A549 (cell line): ENCODE measurements at regions of chr20 and their contacts with region 1.

Region 1: GRCh38 chr20:2172305-2173175 is 70.9 kb downstream of the STK35 start:
- DNase-seq: peak; percentile 59 to 88
- ATAC-seq: peak; percentile 86 to 89
- H3K4me3 ChIP-seq: no peak overlapping the region; the same call in 2 of the 3 replicates
- H3K27ac ChIP-seq: no peak overlapping the region
- H3K4me1 ChIP-seq: no peaks in the 10 kb centered on the region
- CTCF ChIP-seq: peak; percentile 97
- EP300 ChIP-seq: no peak
- POLR2A ChIP-seq: no peak
- RAD21 ChIP-seq: peak; percentile 97

Region 2: GRCh38 chr20:1657556-1658334 is 514.8 kb before region 1 on chr20 and contains the start of gene SIRPG:
- CTCF ChIA-PET with region 1: no interaction called
- POLR2A ChIA-PET with region 1: no interaction called
- DNase-seq: no peak
- ATAC-seq: no peak
- H3K4me3 ChIP-seq: no peak within 1 kb of the TSS
- H3K27ac ChIP-seq: no peak within 1 kb of the TSS
- H3K4me1 ChIP-seq: no peaks in the 10 kb centered on the region
- CTCF ChIP-seq: no peak
- EP300 ChIP-seq: no peak
- POLR2A ChIP-seq: no peak
- RAD21 ChIP-seq: no peak
- polyA plus RNA-seq, gene SIRPG: not detected in 2 replicates

Region 3: DNA sequence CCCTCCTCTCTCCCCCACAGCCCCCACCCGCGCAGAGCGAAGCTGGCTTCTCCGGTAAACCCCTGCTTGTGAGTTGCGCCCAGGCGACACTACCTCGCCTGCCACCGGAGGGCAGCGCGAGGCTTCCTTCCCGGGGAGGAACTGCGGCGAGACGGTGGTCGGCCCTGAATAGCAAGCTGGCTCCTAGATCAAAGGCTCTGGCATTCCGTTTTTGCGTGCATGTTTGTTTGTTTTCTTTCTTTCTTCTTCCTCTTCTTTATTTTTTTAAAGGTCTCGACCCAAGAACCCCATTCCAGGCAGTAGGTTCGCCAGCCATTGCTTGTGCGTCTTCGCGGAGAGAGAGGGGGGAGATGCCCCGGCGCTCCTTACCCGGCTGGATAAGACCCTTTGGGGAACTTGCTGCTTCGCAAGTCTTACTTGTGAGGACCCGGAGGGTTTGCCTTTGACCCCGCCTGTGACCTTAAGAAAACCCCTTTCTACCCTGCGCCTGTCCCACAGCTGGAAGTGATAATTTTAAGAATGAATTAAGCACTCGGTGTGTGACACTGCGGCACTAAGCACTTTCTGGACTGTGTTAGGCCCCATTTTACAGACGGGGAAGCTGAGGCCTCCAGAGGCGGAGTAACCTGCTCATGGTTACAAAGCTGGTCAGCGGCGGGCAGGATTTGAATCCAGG is 370.0 kb before region 1 on chr20:
- CTCF ChIA-PET with region 1: interaction called, 28 read pairs
- POLR2A ChIA-PET with region 1: no interaction called
- DNase-seq: peak; percentile 70 to 78
- ATAC-seq: peak; percentile 84 to 87
- H3K4me3 ChIP-seq: peak overlapping the region; percentile 28
- H3K27ac ChIP-seq: peak overlapping the region; percentile 47 to 62; a peak in 5 of 6 replicates
- H3K4me1 ChIP-seq: peaks cover 11% of the 10 kb centered on the region
- CTCF ChIP-seq: peak; percentile 81
- EP300 ChIP-seq: no peak
- POLR2A ChIP-seq: no peak
- RAD21 ChIP-seq: peak; percentile 84 to 95

Region 4: DNA sequence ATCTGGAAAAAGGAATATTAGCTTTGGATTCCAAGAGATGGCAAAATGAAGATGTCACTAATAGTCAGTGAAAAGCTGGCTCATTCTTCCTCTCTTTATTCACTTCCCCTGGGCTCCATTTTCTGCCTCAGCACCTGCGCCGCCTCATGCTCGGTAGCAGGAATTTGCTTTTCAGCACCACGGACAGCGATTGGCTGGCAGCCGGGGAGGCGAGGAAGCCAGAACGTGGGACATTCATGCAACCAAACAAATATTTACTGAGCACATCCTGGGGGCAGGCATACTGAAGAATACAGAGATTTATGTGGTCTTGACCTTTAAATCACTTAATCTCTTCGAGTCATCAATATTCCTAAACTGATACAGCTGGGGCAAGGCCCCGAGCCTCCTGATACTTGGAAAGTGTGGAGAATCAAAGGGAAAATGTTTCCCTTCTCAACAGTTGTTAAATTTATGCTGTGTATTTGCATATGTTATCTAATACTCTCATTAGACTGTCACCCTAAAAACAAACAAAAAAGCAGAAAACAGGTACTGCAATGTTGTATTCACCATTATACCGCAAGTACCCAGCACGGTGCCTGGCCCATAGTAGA is 166.6 kb before region 1 on chr20:
- CTCF ChIA-PET with region 1: interaction called, 100 read pairs
- POLR2A ChIA-PET with region 1: no interaction called
- DNase-seq: peak in 1 of 2 experiments; percentile 55
- ATAC-seq: peak in 1 of 2 experiments; percentile 65; a peak in 3 of 6 replicates
- H3K4me3 ChIP-seq: no peak overlapping the region
- H3K27ac ChIP-seq: no peak overlapping the region
- H3K4me1 ChIP-seq: no peaks in the 10 kb centered on the region
- CTCF ChIP-seq: no peak
- EP300 ChIP-seq: no peak
- POLR2A ChIP-seq: no peak
- RAD21 ChIP-seq: no peak

Region 5: DNA sequence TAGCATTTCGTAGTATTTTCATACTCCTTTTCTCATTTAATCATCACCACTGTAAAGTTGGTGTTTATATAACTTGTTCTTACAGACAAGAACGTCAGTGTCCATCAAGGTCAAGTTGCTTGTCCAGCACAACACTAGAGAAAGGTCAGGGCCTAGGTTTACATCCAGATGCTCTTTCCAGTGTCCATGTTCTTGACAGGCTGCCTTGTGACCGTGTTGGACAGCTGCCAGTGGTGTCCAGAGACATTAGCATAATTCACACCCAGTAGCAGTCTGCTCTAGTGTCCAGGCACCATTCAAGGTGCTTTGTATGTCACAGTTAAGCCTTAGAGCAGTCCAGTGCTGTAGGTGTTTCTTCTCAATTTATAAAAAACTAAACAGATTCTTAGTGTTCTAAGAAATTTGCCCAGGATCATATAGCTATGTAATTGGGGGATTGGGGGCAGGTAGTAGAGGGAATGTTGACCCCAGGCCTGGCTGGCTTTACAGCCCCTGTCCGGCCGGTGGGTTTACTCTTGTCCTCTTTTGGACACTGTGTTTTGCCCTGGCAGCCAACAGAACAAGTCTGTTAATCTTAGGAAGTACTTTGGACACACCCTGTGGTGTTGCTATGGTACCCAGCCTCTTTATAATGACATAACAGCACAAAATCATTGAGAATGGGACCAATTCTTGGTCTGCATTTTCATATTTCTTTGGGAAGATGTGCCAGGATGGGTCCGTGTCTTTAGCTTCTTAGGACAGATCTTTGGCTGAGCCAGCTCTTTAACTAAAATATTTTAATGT is 62.9 kb before region 1 on chr20:
- CTCF ChIA-PET with region 1: interaction called, 30 read pairs
- POLR2A ChIA-PET with region 1: no interaction called
- DNase-seq: no peak
- ATAC-seq: peak in 1 of 2 experiments; percentile 14; a peak in 1 of 6 replicates
- H3K4me3 ChIP-seq: no peak overlapping the region
- H3K27ac ChIP-seq: peak overlapping the region in 1 of 2 experiments; percentile 22; a peak in 2 of 6 replicates
- H3K4me1 ChIP-seq: peaks cover 30% of the 10 kb centered on the region
- CTCF ChIP-seq: no peak
- EP300 ChIP-seq: no peak
- POLR2A ChIP-seq: no peak
- RAD21 ChIP-seq: no peak

Region 6: DNA sequence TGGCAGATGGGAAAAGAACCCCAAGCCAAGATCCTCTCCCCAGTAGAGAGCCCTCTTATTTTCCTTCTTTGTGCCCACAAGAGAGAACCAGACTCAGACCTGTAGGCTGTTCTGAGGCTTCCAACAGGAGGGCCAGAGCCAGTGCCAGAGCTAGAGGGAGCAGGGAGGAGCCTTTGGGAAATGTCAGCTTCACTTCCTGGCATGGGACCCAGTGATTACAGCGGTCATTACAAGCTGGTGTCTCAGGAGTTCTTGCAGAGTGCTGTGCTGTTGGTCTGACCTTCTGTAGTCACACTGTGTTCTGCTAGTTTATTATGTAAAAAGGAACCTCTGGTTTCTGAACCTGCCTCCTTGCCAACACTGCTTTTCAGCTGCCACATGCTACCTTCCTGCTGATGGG is 32.0 kb before region 1 on chr20:
- CTCF ChIA-PET with region 1: interaction called, 22 read pairs
- POLR2A ChIA-PET with region 1: no interaction called
- DNase-seq: no peak
- ATAC-seq: no peak
- H3K4me3 ChIP-seq: no peak overlapping the region
- H3K27ac ChIP-seq: no peak overlapping the region
- H3K4me1 ChIP-seq: no peaks in the 10 kb centered on the region
- CTCF ChIP-seq: no peak
- EP300 ChIP-seq: no peak
- POLR2A ChIP-seq: no peak
- RAD21 ChIP-seq: no peak

Region 7: GRCh38 chr20:2195614-2196013 is 23.1 kb after region 1 on chr20:
- CTCF ChIA-PET with region 1: interaction called, 51 read pairs
- POLR2A ChIA-PET with region 1: no interaction called
- DNase-seq: no peak
- ATAC-seq: peak; percentile 72 to 82
- H3K4me3 ChIP-seq: no peak overlapping the region
- H3K27ac ChIP-seq: no peak overlapping the region
- H3K4me1 ChIP-seq: no peaks in the 10 kb centered on the region
- CTCF ChIP-seq: no peak
- EP300 ChIP-seq: no peak
- POLR2A ChIP-seq: no peak
- RAD21 ChIP-seq: no peak